ENCODE measurements at regions of chr2 and their contacts with region 1.

Region 1: GRCh38 chr2:32039447-32040219 is at the start of gene DPY30:
- DNase-seq: peak; percentile 96
- H3K4me3 ChIP-seq: peak within 1 kb of the TSS; percentile 69 to 93
- H3K27ac ChIP-seq: peak within 1 kb of the TSS; percentile 70 to 85
- H3K4me1 ChIP-seq: peaks cover 0 to 4% of the 10 kb centered on the region in 2 experiments; a peak in 1 of 4 replicates
- H3K27me3 ChIP-seq: no peaks in the 10 kb centered on the region
- CTCF ChIP-seq: peak; percentile 18
- EP300 ChIP-seq: no peak; a peak in 1 of 4 replicates
- RAD21 ChIP-seq: peak; percentile 31
- polyA plus RNA-seq, gene DPY30: 130 and 155 TPM in 2 replicates

Region 2: GRCh38 chr2:32063310-32064161 is 23.9 kb after region 1 on chr2 and contains the start of gene SPAST:
- CTCF ChIA-PET with region 1: interaction called, 9 read pairs
- POLR2A ChIA-PET with region 1: interaction called, 58 read pairs
- DNase-seq: peak; percentile 99
- H3K4me3 ChIP-seq: peak within 1 kb of the TSS; percentile 65 to 79
- H3K27ac ChIP-seq: peak within 1 kb of the TSS; percentile 85 to 88
- H3K4me1 ChIP-seq: peaks cover 9 to 10% of the 10 kb centered on the region in 2 experiments; a peak in 3 of 4 replicates
- H3K27me3 ChIP-seq: no peaks in the 10 kb centered on the region
- CTCF ChIP-seq: peak; percentile 45
- EP300 ChIP-seq: 0 out of 4 replicates have a peak, but pooled peaks of 1 of the 2 experiments have one; percentile 5
- RAD21 ChIP-seq: no peak; the same call in 1 of the 2 replicates
- polyA plus RNA-seq, gene SPAST: 6.1 and 6.8 TPM in 2 replicates

Region 3: GRCh38 chr2:32166115-32166574 is 126.5 kb after region 1 on chr2:
- CTCF ChIA-PET with region 1: no interaction called
- POLR2A ChIA-PET with region 1: interaction called, 11 read pairs
- DNase-seq: no peak
- H3K4me3 ChIP-seq: peak overlapping the region; percentile 62 to 93
- H3K27ac ChIP-seq: peak overlapping the region; percentile 79 to 84; a peak in 3 of 4 replicates
- H3K4me1 ChIP-seq: peaks cover 5 to 9% of the 10 kb centered on the region in 2 experiments; a peak in 2 of 4 replicates
- H3K27me3 ChIP-seq: no peaks in the 10 kb centered on the region
- CTCF ChIP-seq: no peak
- EP300 ChIP-seq: no peak
- RAD21 ChIP-seq: no peak